Testis (tissue), 5 donors: ENCODE measurements at regions of chr12 and their contacts with region 1.

Region 1: DNA sequence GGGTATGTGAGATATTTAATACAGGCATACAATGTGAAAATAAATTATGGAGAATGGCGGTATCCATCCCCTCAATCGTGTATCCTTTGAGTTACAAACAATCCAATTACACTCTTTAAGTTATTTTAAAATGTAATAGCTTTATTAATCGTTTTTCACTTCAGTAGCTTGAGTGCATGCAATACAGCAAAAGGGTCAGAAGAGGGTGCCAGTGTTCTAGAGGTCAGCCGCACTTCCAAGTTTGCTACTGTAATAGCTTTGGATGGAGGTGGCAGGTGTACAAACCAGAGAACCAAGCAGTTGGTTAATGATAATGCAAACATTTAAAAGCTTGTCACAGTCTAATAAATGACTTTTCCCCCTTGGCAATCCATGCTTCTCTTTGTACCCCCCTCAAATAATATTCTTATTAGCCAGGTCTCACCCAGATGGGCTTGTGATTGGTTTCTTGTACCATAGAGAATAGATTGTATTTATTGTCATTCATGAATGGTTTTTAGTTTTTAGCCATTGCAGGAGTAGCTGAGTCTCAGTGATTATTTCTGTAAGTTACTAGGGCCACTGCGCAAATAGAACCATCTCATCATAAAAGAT is 127.0 kb downstream of the ERC1 start:
- DNase-seq: peak; percentile 84
- H3K4me3 ChIP-seq: no peak overlapping the region
- H3K27ac ChIP-seq: no peak overlapping the region
- H3K4me1 ChIP-seq: no peaks in the 10 kb centered on the region
- H3K27me3 ChIP-seq: no peaks in the 10 kb centered on the region
- CTCF ChIP-seq: peak; percentile 87 to 92 (median 90)
- POLR2A ChIP-seq: no peak

Region 2: DNA sequence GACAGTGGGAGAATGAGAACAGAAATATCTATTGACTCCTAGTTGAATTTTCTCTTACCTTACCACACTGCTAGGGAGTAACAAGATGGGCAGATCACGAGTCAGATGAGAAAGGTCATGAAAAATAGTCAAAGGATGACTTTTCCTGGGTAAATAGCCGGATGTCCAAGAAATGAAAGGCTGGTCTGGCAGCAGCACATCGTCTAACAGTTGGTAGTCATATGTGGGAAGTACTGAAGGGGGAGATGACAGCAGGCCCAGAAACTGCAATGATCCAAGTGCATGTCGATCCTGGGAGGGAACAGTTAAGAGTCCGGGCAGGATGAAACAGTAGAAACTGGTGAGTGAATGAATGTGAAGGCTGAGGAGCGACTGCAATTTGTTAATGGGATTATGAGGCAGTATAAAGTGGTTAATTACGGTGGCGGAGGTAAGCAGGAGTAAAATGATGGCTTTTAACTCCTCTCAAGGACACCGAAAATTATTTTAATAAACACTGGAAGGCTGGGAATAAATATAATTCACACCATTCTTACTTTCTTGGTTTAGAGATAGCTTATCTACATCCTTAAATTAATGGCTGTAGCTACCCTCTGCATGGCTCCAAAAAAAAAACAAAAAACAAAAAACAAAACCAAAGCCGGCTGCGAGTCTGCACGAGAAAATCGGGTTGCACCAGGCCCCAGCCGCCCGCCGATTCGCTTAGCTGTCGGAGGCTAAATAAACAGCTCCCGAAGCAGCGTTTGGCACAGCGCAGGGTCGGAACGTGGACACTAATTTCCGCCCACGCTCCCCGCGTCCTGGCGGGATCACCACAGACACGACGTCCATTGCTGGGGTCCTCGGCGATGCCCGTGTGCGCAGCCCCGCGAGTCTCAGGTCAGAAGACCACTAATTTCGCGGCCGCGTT is 128.1 kb before region 1 on chr12:
- intact Hi-C with region 1: no loop called
- DNase-seq: peak; percentile 80
- H3K4me3 ChIP-seq: peak overlapping the region; percentile 85 to 96
- H3K27ac ChIP-seq: peak overlapping the region; percentile 97
- H3K4me1 ChIP-seq: peaks cover 15% of the 10 kb centered on the region
- H3K27me3 ChIP-seq: no peaks in the 10 kb centered on the region
- CTCF ChIP-seq: no peak
- POLR2A ChIP-seq: no peak

Region 3: DNA sequence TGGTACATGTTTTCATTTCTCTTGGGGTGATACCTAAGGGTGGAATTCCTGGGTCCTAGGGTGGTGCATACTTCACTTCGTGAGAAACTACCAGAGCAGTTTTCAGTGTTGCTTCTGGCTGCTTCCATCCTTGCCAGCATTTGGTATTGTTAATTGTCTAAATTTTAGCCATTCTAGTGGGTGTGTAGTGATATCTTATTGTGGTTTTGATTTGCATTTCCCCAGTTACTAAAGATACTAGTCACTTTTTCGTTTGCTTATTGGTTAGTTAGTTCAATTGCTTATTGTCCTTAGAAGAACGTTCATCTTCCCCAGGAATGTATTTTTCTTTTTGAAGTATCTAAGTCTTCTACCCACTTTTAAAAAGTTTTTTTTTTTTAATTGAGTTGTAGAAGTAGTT is 46.9 kb before region 1 on chr12:
- intact Hi-C with region 1: no loop called
- DNase-seq: no peak
- H3K4me3 ChIP-seq: no peak overlapping the region
- H3K27ac ChIP-seq: no peak overlapping the region
- H3K4me1 ChIP-seq: no peaks in the 10 kb centered on the region
- H3K27me3 ChIP-seq: no peaks in the 10 kb centered on the region
- CTCF ChIP-seq: no peak
- POLR2A ChIP-seq: no peak

Region 4: DNA sequence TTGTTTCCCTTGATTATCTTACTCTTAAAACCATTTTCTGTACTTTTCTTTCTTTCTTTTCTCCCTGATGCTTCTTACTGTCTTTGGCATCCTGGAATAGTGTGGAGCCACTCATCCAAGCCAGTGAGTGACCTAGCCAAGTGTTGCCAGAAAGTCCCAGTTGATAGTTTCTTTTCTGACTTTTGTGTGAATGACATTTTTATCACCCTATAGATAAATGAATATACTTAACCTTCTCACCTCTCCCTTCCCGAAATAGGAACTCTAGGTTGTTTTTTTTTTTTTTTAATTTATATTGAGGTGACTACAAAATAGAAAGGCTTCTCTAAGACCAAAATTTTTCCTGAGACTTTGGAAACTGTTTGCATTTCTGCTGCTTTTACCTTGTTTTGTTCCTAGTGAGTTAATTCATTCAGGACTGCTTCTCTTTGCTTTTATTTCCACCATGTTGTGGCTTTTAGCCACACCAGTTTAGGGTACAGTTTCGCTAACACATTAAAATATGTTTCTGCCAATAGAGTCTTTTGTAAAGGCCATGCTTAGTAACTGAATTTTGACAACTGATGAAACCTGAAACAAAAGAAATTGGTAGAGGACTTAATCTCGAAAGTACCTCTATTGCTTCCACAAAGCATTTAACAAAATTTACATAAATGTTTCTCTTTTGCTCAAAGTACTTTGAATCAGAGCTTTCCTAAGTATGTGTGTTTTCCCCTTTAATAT is 67.6 kb after region 1 on chr12:
- intact Hi-C with region 1: no loop called
- DNase-seq: no peak
- H3K4me3 ChIP-seq: no peak overlapping the region
- H3K27ac ChIP-seq: no peak overlapping the region
- H3K4me1 ChIP-seq: no peaks in the 10 kb centered on the region
- H3K27me3 ChIP-seq: no peaks in the 10 kb centered on the region
- CTCF ChIP-seq: no peak
- POLR2A ChIP-seq: no peak

Region 5: DNA sequence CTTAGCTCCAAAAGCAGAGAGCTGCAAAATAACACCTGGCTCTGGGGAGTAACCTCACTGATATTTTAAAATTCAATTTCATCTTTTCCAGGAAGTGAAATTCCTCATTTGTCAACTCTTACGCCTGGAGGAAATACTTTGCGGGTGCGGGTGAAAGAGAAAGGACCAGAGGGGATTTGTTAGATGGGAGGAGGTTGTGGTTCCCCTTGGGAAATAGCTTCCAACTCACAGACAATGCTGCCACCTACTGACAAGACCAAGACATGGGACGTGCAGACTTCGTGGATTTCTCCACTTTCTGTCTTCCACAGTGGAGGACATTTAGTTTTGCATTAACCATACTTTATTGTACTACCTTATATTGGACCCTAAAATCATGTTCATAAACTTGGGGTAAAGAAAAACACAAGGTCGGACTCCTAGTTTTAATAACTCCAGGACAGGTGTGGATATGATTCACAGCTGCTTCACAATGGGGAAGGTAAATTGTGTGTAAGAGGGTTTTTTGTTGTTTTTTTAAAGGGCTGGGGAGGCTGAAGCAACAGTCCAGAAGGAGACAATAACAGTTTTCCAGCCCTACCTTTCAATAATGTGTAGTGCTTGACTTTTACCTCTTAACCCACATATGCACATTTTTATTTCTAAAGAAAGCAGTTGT is 465.5 kb after region 1 on chr12:
- intact Hi-C with region 1: loop called (anchors 10 kb)
- DNase-seq: peak; percentile 78
- H3K4me3 ChIP-seq: no peak overlapping the region
- H3K27ac ChIP-seq: no peak overlapping the region
- H3K4me1 ChIP-seq: peaks cover 3% of the 10 kb centered on the region
- H3K27me3 ChIP-seq: no peaks in the 10 kb centered on the region
- CTCF ChIP-seq: peak; percentile 74 to 84 (median 75)
- POLR2A ChIP-seq: no peak

Region 6: DNA sequence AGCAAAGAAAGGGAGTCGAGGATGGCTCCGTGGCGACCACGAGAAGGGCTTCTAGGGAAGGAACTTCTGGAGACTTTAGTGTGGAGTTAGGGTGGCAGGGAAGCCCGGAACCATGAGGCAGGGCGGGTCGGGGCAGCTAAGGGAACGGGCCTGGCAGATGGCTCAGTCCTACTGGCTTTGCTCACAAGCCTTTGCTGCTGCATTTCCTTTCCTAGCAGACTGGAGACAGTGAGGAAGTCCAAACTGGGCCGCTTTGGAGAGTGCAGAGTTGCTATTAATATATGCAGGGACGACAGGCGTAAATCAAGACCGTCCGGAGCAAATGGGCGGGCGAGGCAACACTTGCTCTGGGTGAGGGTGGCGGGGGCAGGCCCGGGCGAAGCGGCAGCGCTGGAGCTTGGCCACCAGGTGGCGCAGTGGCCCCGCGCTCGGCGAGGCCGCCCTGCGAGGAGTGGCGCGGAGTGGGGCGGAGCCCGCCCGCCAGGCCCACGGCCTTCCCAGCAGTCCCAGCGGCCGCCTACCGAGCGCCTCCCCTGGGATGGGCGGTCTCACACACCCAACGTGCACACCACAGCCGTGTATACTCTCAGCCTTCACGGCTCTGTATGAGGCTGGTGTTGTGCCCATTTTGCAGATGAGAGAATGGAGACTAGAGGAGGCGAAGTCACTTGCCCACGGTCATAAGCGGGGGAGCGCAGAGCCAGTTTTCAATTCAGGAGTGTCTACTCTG is 677.9 kb after region 1 on chr12:
- intact Hi-C with region 1: no loop called
- DNase-seq: peak; percentile 94
- H3K4me3 ChIP-seq: peak overlapping the region; percentile 62 to 76
- H3K27ac ChIP-seq: peak overlapping the region; percentile 73 to 81
- H3K4me1 ChIP-seq: peaks cover 5% of the 10 kb centered on the region
- H3K27me3 ChIP-seq: no peaks in the 10 kb centered on the region
- CTCF ChIP-seq: peak; percentile 99 to 100 (median 100)
- POLR2A ChIP-seq: no peak